ENCODE measurements at regions of chr7 and their contacts with region 1.

Region 1: GRCh38 chr7:45111298-45112223 is at the start of gene TBRG4:
- DNase-seq: peak; percentile 96
- ATAC-seq: peak; percentile 94
- H3K4me3 ChIP-seq: peak within 1 kb of the TSS; percentile 67 to 93 (median 72)
- H3K4me3 Mint-ChIP-seq: peak within 1 kb of the TSS; percentile 91
- H3K27ac ChIP-seq: peak within 1 kb of the TSS; percentile 91 to 98
- H3K27ac Mint-ChIP-seq: peak within 1 kb of the TSS; percentile 95
- H3K4me1 ChIP-seq: peaks cover 22 to 38% of the 10 kb centered on the region in 2 donors
- H3K4me1 Mint-ChIP-seq: peaks cover 40% of the 10 kb centered on the region
- H3K27me3 ChIP-seq: no peaks in the 10 kb centered on the region
- H3K27me3 Mint-ChIP-seq: no peaks in the 10 kb centered on the region
- CTCF ChIP-seq: no peak
- total RNA-seq, gene TBRG4: 111 and 116 TPM in 2 replicates

Region 2: DNA sequence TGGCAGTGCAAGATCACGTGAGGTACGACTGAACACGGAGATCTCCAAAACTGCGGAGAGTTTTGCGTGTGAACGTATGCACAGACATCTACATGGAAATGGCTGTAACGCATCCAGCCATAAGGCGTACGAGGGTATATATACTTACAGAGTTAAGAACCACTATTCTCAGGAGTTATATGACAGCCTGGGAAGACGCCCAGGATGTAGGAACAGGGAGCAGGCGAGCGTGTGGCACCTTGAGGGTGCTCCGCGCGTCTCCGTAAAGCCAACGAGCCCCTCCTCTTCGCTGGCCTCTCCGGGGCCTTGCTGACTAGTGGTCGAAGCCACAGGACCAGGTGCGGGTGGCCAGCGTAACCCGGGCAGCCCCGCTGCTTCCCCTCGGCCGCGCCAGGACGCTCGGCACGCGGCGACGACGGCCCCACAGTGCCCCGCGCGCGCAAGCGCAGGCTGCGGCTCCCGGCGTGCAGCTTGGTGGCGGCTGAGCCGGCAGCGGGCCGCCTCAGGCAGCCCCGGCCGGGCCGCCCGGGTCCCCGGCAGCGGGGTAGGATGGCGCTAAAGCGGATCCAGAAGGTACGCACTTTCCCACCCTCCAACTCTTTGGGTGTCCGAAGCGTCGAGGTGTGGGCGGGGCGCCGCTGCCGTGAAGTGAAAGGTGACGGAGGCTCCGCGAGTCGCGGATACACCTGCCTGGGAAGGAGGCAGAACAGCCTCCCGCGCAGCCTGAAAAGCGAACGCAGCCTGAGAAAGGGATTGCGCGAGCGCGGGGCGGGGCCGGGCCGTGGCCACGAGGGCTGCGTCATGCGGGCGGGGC is 1185.4 kb before region 1 on chr7 and contains the start of gene UBE2D4:
- CTCF ChIA-PET with region 1: no interaction called
- POLR2A ChIA-PET with region 1: no interaction called
- intact Hi-C with region 1: loop called (anchors 2 kb)
- DNase-seq: peak; percentile 93
- ATAC-seq: peak; percentile 87
- H3K4me3 ChIP-seq: peak within 1 kb of the TSS; percentile 53 to 85 (median 72)
- H3K4me3 Mint-ChIP-seq: peak within 1 kb of the TSS; percentile 95
- H3K27ac ChIP-seq: peak within 1 kb of the TSS; percentile 87 to 94
- H3K27ac Mint-ChIP-seq: peak within 1 kb of the TSS; percentile 96
- H3K4me1 ChIP-seq: peaks cover 8 to 21% of the 10 kb centered on the region in 2 donors
- H3K4me1 Mint-ChIP-seq: peaks cover 18% of the 10 kb centered on the region
- H3K27me3 ChIP-seq: no peaks in the 10 kb centered on the region
- H3K27me3 Mint-ChIP-seq: no peaks in the 10 kb centered on the region
- CTCF ChIP-seq: no peak
- total RNA-seq, gene UBE2D4: 9.4 and 11.4 TPM in 2 replicates

Region 3: GRCh38 chr7:44573464-44574286 is 537.9 kb before region 1 on chr7 and contains the start of gene DDX56:
- CTCF ChIA-PET with region 1: no interaction called
- POLR2A ChIA-PET with region 1: no interaction called
- intact Hi-C with region 1: loop called (anchors 2 kb)
- DNase-seq: peak; percentile 94
- ATAC-seq: peak; percentile 97
- H3K4me3 ChIP-seq: peak within 1 kb of the TSS; percentile 60 to 94 (median 84)
- H3K4me3 Mint-ChIP-seq: peak within 1 kb of the TSS; percentile 98
- H3K27ac ChIP-seq: peak within 1 kb of the TSS; percentile 84 to 93
- H3K27ac Mint-ChIP-seq: peak within 1 kb of the TSS; percentile 97
- H3K4me1 ChIP-seq: peaks cover 23 to 29% of the 10 kb centered on the region in 2 donors
- H3K4me1 Mint-ChIP-seq: peaks cover 38% of the 10 kb centered on the region
- H3K27me3 ChIP-seq: no peaks in the 10 kb centered on the region
- H3K27me3 Mint-ChIP-seq: no peaks in the 10 kb centered on the region
- CTCF ChIP-seq: no peak
- total RNA-seq, gene DDX56: 102 and 104 TPM in 2 replicates

Region 4: GRCh38 chr7:44581879-44582603 is 529.5 kb before region 1 on chr7 and contains the start of gene TMED4:
- CTCF ChIA-PET with region 1: no interaction called
- POLR2A ChIA-PET with region 1: no interaction called
- intact Hi-C with region 1: loop called (anchors 1 kb)
- DNase-seq: peak; percentile 100
- ATAC-seq: peak; percentile 92
- H3K4me3 ChIP-seq: peak within 1 kb of the TSS; percentile 72 to 99 (median 88)
- H3K4me3 Mint-ChIP-seq: peak within 1 kb of the TSS; percentile 96
- H3K27ac ChIP-seq: peak within 1 kb of the TSS; percentile 92 to 97
- H3K27ac Mint-ChIP-seq: peak within 1 kb of the TSS; percentile 99
- H3K4me1 ChIP-seq: peaks cover 21% of the 10 kb centered on the region in 2 donors
- H3K4me1 Mint-ChIP-seq: peaks cover 28% of the 10 kb centered on the region
- H3K27me3 ChIP-seq: no peaks in the 10 kb centered on the region
- H3K27me3 Mint-ChIP-seq: no peaks in the 10 kb centered on the region
- CTCF ChIP-seq: no peak
- total RNA-seq, gene TMED4: 84.0 and 84.1 TPM in 2 replicates

Region 5: GRCh38 chr7:44980393-44981034 is 131.0 kb before region 1 on chr7:
- CTCF ChIA-PET with region 1: no interaction called
- POLR2A ChIA-PET with region 1: interaction called, 3 read pairs
- intact Hi-C with region 1: loop called (anchors 1 kb)
- DNase-seq: peak; percentile 88
- ATAC-seq: peak; percentile 46
- H3K4me3 ChIP-seq: peak overlapping the region in 2 of 5 experiments; percentile 1 to 90
- H3K4me3 Mint-ChIP-seq: peak overlapping the region; percentile 97
- H3K27ac ChIP-seq: peak overlapping the region; percentile 79 to 93
- H3K27ac Mint-ChIP-seq: peak overlapping the region; percentile 98
- H3K4me1 ChIP-seq: peaks cover 53 to 75% of the 10 kb centered on the region in 2 donors
- H3K4me1 Mint-ChIP-seq: peaks cover 86% of the 10 kb centered on the region
- H3K27me3 ChIP-seq: no peaks in the 10 kb centered on the region
- H3K27me3 Mint-ChIP-seq: no peaks in the 10 kb centered on the region
- CTCF ChIP-seq: no peak

Region 6: GRCh38 chr7:45160417-45160881 is 48.9 kb after region 1 on chr7:
- CTCF ChIA-PET with region 1: no interaction called
- POLR2A ChIA-PET with region 1: no interaction called
- intact Hi-C with region 1: no loop called
- DNase-seq: no peak
- ATAC-seq: no peak
- H3K4me3 ChIP-seq: no peak overlapping the region
- H3K4me3 Mint-ChIP-seq: no peak overlapping the region
- H3K27ac ChIP-seq: no peak overlapping the region
- H3K27ac Mint-ChIP-seq: no peak overlapping the region
- H3K4me1 ChIP-seq: peaks cover 10 to 12% of the 10 kb centered on the region in 2 donors
- H3K4me1 Mint-ChIP-seq: peaks cover 15% of the 10 kb centered on the region
- H3K27me3 ChIP-seq: peaks cover 0 to 42% (median 13%) of the 10 kb centered on the region in 4 experiments
- H3K27me3 Mint-ChIP-seq: peaks cover 41% of the 10 kb centered on the region
- CTCF ChIP-seq: no peak

Measured in B cell (primary cell).